Sigmoid colon (tissue), 7 donors: ENCODE measurements at regions of chr3 and their contacts with region 1.

Region 1: DNA sequence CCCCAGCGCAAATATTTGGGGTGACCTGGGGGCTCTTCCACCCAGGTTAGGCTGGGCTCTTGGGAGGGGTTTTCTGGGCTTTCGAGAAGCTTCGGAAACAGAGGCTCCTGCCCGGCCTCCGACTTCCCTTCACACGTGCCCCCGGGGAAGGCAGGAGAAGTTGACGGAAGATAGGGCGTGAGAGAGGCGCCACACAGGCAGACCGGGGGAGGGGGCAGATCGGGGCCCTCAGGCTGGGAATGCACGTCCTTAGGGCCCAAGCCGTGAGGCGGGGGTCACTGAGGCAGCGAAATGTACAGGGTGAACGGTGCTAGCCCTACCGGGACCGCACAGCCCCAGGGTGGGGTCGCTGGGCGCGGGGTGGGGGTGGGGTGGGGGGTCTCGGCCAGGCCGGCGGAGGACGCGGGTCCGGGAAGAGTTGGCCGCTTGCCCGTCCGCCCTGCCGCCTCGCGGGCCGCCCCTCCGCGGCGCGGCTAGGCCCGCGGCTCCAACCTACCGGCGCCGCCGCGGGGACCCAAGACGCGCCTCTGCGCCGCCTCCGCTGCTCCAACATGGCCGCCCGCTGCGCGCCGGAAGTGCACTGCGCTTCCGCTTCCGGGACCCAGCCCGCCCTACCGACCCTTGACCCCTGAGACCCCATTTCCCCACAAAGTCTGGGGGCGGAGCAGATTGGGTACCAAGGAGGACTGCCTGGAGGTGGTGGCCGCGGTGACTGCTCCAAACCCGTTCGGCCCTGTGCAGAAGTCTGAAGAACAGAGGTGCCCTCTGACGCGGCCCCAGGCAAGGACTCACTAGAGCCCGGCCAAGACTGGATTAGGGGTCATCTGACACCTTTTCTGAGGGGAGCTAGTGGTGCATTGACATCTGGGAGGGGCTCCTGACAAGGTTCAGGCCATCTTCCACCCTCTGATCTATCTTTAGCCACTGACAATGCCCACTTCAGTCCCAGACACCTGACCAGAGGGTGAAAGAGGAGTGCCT is at the start of gene CCDC71:
- DNase-seq: peak; percentile 86
- H3K4me3 ChIP-seq: peak within 1 kb of the TSS; percentile 79 to 96 (median 86)
- H3K27ac ChIP-seq: peak within 1 kb of the TSS; percentile 85 to 92 (median 88)
- H3K4me1 ChIP-seq: peaks cover 0 to 32% (median 27%) of the 10 kb centered on the region in 4 donors
- H3K27me3 ChIP-seq: no peaks in the 10 kb centered on the region
- CTCF ChIP-seq: no peak
- EP300 ChIP-seq: no peak
- POLR2A ChIP-seq: peak in 1 of 2 donors; percentile 12
- total RNA-seq, gene CCDC71: 12.5 to 27.3 (median 16.4) TPM

Region 2: GRCh38 chr3:49133226-49133951 is 32.7 kb before region 1 on chr3:
- intact Hi-C with region 1: loop called (anchors 5 kb)
- DNase-seq: peak; percentile 95
- H3K4me3 ChIP-seq: peak overlapping the region; percentile 64 to 86 (median 69)
- H3K27ac ChIP-seq: peak overlapping the region; percentile 87 to 97 (median 92)
- H3K4me1 ChIP-seq: peaks cover 0 to 37% (median 33%) of the 10 kb centered on the region in 4 donors
- H3K27me3 ChIP-seq: no peaks in the 10 kb centered on the region
- CTCF ChIP-seq: no peak
- EP300 ChIP-seq: no peak
- POLR2A ChIP-seq: no peak